ENCODE measurements at regions of chr22 and their contacts with region 1.

Region 1: DNA sequence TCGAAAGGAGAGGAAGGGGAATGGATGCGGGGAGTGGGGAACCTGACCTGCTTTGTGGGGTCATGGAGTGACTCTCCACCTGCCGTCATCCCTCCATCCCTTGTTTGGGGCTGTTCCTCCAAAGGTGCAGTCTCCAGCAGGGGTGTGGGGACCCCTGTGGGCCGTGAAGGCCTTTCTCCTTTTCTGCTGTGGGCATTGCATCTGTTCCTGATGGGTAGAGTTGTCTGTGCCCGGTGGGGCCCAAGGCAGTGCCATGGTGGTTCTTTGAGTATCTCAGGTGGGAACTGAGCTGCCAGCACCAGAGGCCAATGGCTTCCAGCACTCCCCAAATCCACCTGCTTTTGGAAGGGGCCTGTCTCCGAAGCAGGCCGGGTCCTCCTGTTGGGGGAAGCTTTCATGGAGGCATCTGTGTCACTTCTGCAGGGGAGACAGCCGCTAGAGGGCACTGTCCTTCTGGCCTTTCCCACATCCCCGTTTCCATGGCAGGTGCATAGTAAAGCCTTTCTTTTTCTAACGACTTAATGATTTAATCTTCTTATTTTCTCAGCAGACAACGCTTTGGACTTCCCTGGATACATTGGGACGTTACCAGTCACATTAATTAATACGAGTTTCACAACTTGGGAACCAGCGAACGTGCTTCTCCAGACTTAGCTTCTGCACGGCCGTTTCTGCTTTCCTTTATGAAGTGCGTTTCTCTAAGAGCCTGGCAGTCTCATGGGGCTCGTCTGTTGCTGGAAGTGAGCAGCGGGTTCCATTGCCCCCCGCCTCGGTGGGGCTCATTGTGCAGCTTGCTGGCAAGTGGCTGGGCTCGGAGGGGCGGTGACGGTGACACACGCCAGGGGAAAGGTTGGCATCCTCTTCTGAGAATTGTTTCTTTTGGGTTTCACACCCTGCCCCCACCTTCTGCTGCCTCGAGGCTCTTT is 57.1 kb downstream of the PARVB start:
- DNase-seq: peak; percentile 85
- CTCF ChIP-seq: peak; percentile 72

Region 2: DNA sequence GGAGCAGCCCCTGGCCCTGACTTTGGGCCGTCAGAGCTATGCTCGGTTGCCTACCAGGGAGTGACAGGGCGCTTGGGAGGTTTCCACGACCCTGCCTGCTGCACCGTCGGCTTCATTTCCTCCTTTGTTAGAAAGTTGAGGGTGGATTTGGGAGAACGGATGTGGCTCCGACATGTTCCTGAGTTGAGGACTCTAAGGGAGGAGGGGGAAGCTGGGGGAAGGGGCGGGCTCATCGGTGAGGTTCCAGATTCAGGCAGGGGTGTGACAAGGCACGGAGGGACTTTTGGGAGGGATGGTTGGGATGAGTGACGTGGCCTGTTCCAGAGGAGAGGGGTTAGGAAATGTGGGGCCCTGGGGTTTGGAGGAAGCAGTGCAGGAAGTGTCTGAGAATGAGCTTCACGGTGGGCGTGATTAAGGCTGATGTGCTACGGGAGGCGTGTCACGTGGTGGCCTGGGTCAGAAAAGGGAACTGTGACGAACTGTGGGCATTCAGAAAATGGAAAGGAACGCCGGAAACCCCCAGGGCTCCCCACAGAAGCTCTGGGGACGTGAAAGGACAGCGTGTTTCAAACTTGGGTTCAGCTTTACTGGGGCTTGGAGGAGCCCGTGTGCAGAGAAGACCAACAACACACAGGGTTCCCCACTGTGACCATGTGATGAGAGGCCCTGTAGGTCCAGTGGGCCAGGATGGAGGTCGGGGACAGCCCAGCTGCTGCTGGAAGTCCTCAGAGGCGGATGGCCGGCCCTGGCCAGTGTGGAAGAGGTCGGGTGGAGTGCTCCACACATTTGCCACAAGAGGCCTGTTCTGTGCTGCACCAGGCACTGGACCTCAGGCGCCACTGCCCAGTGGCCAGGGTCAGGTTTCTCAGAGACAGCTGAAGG is 54.3 kb before region 1 on chr22:
- CTCF ChIA-PET with region 1: interaction called, 18 read pairs
- POLR2A ChIA-PET with region 1: interaction called, 3 read pairs
- DNase-seq: peak; percentile 88
- CTCF ChIP-seq: no peak

Region 3: GRCh38 chr22:44068422-44069191 is 12.6 kb before region 1 on chr22:
- CTCF ChIA-PET with region 1: interaction called, 134 read pairs
- POLR2A ChIA-PET with region 1: interaction called, 3 read pairs
- DNase-seq: peak; percentile 79
- CTCF ChIP-seq: peak; percentile 17

Region 4: GRCh38 chr22:44094751-44095302 is 13.6 kb after region 1 on chr22:
- CTCF ChIA-PET with region 1: interaction called, 11 read pairs
- POLR2A ChIA-PET with region 1: no interaction called
- DNase-seq: no peak
- CTCF ChIP-seq: no peak

Region 5: GRCh38 chr22:44103735-44104480 is 22.7 kb after region 1 on chr22:
- CTCF ChIA-PET with region 1: interaction called, 10 read pairs
- POLR2A ChIA-PET with region 1: no interaction called
- DNase-seq: no peak
- CTCF ChIP-seq: no peak

Region 6: DNA sequence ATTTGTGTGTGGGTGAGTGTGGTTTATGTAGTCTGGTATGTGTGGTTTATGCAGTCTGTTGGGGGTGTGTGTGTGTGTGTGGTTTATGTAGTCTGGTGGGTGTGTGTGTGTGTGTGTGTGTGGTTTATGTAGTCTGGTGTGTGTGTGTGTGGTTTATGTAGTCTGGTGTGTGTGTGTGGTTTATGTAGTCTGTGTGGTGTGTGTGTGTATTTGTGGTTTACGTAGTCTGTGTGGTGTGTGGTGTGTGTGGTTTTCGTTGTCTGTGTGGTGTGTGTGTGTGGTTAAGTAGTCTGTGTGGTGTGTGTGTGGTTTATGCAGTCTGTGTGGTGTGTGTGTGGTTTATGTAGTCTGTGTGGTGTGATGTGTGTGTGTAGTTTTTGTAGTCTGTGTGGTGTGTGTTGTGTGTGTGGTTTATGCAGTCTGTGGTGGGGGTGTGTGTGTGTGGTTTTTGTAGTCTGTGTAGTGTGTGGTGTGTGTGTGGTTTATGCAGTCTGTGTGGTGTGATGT is 73.3 kb after region 1 on chr22:
- CTCF ChIA-PET with region 1: no interaction called
- POLR2A ChIA-PET with region 1: no interaction called
- DNase-seq: no peak
- CTCF ChIP-seq: no peak

Region 7: DNA sequence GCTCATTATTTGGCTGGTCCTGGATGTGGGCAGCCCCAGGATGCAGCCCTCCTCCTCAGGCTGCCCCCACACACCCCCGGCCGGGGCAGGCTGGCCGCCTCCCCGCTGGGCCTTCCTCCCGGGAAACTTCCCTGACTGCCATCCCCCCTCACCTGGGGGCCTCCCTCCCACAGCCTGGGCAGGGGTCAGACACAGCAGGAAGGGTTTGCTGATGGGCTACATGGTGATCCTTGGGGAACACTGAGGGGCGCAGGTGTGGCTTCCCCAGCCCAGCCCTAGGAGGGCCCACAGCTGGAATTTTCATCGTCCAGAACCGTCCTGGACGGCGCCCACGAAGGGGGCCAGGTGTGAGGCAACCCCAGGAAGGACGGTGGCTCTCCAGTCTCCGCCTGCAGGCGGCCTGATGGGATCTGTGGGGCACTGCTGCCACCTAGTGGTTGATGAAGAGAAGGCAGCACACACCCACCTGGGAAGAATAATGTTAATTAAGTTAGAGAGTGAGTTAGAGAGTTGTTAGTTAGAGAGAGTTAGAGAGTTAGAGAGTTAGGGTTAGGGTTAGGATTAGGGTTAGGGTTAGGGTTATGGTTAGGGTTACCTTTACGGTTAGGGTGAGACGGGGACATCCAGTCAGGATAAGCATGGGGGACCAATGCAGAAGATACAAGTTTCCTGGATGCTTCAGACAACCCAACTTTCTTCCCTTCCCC is 544.9 kb after region 1 on chr22:
- CTCF ChIA-PET with region 1: interaction called, 11 read pairs
- POLR2A ChIA-PET with region 1: no interaction called
- DNase-seq: peak; percentile 88
- CTCF ChIP-seq: peak; percentile 94

Measured in GM10248 (cell line).